ENCODE measurements at regions of chr1 and their contacts with region 1.

Region 1: GRCh38 chr1:186482661-186483255 is 21.8 kb upstream of the PDC start:
- DNase-seq: peak; percentile 31
- ATAC-seq: peak; percentile 86
- H3K4me3 ChIP-seq: no peak overlapping the region
- H3K27ac ChIP-seq: no peak overlapping the region
- H3K4me1 ChIP-seq: no peaks in the 10 kb centered on the region
- H3K27me3 ChIP-seq: no peaks in the 10 kb centered on the region
- CTCF ChIP-seq: peak; percentile 90 to 96 (median 94)
- EP300 ChIP-seq: no peak
- POLR2A ChIP-seq: no peak
- RAD21 ChIP-seq: peak; percentile 100

Region 2: GRCh38 chr1:186404454-186405051 is 78.2 kb before region 1 on chr1:
- CTCF ChIA-PET with region 1: interaction called, 8 read pairs
- POLR2A ChIA-PET with region 1: no interaction called
- RAD21 ChIA-PET with region 1: interaction called, 11 read pairs
- SMC1A ChIA-PET with region 1: interaction called, 7 read pairs
- in situ Hi-C with region 1: no loop called
- intact Hi-C with region 1: no loop called
- DNase-seq: no peak
- ATAC-seq: peak; percentile 72
- H3K4me3 ChIP-seq: no peak overlapping the region
- H3K27ac ChIP-seq: no peak overlapping the region
- H3K4me1 ChIP-seq: no peaks in the 10 kb centered on the region
- H3K27me3 ChIP-seq: no peaks in the 10 kb centered on the region
- CTCF ChIP-seq: peak; percentile 58 to 65 (median 60)
- EP300 ChIP-seq: no peak
- POLR2A ChIP-seq: no peak
- RAD21 ChIP-seq: peak; percentile 72

Region 3: DNA sequence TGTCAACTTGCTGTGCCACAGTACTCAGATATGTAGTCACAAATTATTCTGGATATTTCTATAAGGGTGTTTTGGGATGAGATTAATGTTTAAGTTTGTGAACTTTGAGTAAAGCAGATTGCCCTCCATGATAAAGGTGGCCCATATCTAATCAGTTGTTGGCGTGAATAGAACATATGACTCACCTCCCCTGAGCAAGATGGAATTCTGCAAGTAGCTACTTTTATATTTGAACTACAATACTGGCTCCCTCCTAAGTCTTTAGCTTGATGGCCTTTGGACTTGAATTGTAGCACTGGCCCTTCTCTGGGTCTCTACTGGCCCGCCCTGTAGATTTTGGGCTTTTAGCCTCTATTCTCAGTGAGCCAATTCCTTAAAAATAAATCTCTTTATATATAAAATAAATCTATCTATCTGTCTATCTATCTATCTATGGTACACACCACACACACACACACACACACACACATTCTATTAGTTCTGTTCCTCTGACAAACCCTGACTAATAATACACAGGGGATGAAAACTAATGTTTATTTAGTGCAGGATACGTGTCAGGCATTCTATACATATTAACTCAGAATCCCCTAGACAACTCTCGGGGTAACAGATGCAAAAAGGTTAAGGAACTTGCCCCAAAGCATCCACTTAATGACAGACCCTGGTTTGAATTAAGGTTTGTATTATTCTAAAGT is 16.1 kb after region 1 on chr1:
- CTCF ChIA-PET with region 1: interaction called, 10 read pairs
- POLR2A ChIA-PET with region 1: no interaction called
- RAD21 ChIA-PET with region 1: interaction called, 3 read pairs
- SMC1A ChIA-PET with region 1: interaction called, 3 read pairs
- in situ Hi-C with region 1: no loop called
- intact Hi-C with region 1: no loop called
- DNase-seq: no peak
- ATAC-seq: no peak
- H3K4me3 ChIP-seq: no peak overlapping the region
- H3K27ac ChIP-seq: no peak overlapping the region
- H3K4me1 ChIP-seq: peaks cover 4% of the 10 kb centered on the region; the same call in 1 of the 2 replicates
- H3K27me3 ChIP-seq: no peaks in the 10 kb centered on the region
- CTCF ChIP-seq: no peak
- EP300 ChIP-seq: no peak
- POLR2A ChIP-seq: no peak
- RAD21 ChIP-seq: no peak

Region 4: DNA sequence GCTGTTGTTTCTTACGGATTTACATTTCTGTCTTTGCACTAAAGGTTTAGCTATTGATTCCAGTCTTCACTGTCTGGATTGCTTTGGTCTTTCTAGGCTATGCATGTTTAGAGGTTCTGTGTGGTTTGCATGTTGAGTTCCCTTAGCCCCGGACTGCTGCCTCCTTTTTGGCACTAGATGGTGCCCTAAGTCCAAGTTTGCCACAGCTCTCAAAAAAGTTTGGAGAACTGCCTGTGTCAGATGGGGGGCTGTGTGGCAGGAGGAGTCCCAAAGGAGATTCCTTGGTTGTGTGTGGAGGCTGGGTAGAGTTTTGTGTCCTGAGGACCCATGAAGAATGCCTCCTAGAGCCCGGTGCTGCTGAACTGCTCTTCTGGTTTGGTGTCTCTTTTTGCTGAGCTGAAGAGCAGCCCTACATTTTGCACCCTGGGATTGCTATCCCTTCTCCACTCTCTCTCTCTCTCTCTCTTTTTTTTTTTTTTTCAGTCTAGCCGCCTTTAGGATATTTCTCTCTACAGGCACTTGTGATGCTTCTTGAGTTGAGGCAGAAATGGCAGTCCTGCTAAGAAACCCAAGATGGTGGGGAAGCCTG is 123.1 kb after region 1 on chr1:
- CTCF ChIA-PET with region 1: interaction called, 5 read pairs
- POLR2A ChIA-PET with region 1: no interaction called
- RAD21 ChIA-PET with region 1: interaction called, 4 read pairs
- SMC1A ChIA-PET with region 1: interaction called, 3 read pairs
- in situ Hi-C with region 1: no loop called
- intact Hi-C with region 1: loop called (anchors 1 kb)
- DNase-seq: no peak
- ATAC-seq: peak; percentile 89
- H3K4me3 ChIP-seq: no peak overlapping the region
- H3K27ac ChIP-seq: no peak overlapping the region
- H3K4me1 ChIP-seq: no peaks in the 10 kb centered on the region
- H3K27me3 ChIP-seq: no peaks in the 10 kb centered on the region; a peak in 1 of 4 replicates
- CTCF ChIP-seq: peak; percentile 66 to 83 (median 70)
- EP300 ChIP-seq: no peak
- POLR2A ChIP-seq: no peak
- RAD21 ChIP-seq: peak; percentile 92

Region 5: GRCh38 chr1:186680245-186681061 is 197.7 kb after region 1 on chr1 and contains the start of gene PTGS2:
- CTCF ChIA-PET with region 1: interaction called, 6 read pairs
- POLR2A ChIA-PET with region 1: no interaction called
- RAD21 ChIA-PET with region 1: no interaction called
- SMC1A ChIA-PET with region 1: no interaction called
- in situ Hi-C with region 1: no loop called
- intact Hi-C with region 1: loop called (anchors 2 kb)
- DNase-seq: peak; percentile 25
- ATAC-seq: peak; percentile 92
- H3K4me3 ChIP-seq: 0 out of 2 replicates have a peak within 1 kb of the TSS, but pooled peaks have one; percentile 25
- H3K27ac ChIP-seq: no peak within 1 kb of the TSS
- H3K4me1 ChIP-seq: no peaks in the 10 kb centered on the region
- H3K27me3 ChIP-seq: peaks cover 4 to 16% of the 10 kb centered on the region in 2 experiments; a peak in 3 of 4 replicates
- CTCF ChIP-seq: peak in 2 of 3 experiments; percentile 11 to 28; a peak in 2 of 6 replicates
- EP300 ChIP-seq: no peak
- POLR2A ChIP-seq: no peak
- RAD21 ChIP-seq: no peak
- polyA plus RNA-seq, gene PTGS2: 0.10 TPM in 1 of 2 experiments, not detected in the other

Region 6: GRCh38 chr1:186806477-186806876 is 323.7 kb after region 1 on chr1:
- CTCF ChIA-PET with region 1: interaction called, 5 read pairs
- POLR2A ChIA-PET with region 1: no interaction called
- RAD21 ChIA-PET with region 1: interaction called, 5 read pairs
- SMC1A ChIA-PET with region 1: interaction called, 3 read pairs
- in situ Hi-C with region 1: loop called (anchors 10 kb)
- intact Hi-C with region 1: loop called (anchors 1 kb)
- DNase-seq: no peak
- ATAC-seq: peak; percentile 46; the same call in 1 of the 3 replicates
- H3K4me3 ChIP-seq: no peak overlapping the region
- H3K27ac ChIP-seq: no peak overlapping the region
- H3K4me1 ChIP-seq: peaks cover 3% of the 10 kb centered on the region
- H3K27me3 ChIP-seq: no peaks in the 10 kb centered on the region
- CTCF ChIP-seq: peak; percentile 25 to 55 (median 49); a peak in 5 of 6 replicates
- EP300 ChIP-seq: no peak
- POLR2A ChIP-seq: no peak
- RAD21 ChIP-seq: peak; percentile 73

Region 7: DNA sequence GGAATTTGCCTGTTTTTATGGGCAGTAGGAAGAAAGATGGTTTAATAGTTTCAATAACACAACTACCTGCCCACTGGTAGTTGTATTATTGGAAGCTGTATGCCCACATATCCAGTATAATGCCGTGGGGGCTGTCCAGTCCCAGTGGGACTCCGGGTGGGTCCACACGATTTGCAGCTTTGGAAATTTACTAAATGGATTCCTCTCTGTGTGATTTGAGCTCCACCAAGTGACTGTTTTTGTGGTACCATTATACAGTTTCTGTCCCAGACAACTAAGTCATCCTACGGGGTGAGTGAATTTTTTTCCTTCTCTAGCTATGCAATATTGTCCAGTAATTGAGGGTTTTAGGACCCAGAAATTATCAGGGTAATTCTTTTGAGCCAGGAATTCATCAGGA is 432.8 kb after region 1 on chr1:
- CTCF ChIA-PET with region 1: interaction called, 3 read pairs
- POLR2A ChIA-PET with region 1: no interaction called
- RAD21 ChIA-PET with region 1: no interaction called
- SMC1A ChIA-PET with region 1: no interaction called
- in situ Hi-C with region 1: no loop called
- intact Hi-C with region 1: loop called (anchors 5 kb)
- DNase-seq: no peak
- ATAC-seq: no peak
- H3K4me3 ChIP-seq: no peak overlapping the region
- H3K27ac ChIP-seq: no peak overlapping the region
- H3K4me1 ChIP-seq: no peaks in the 10 kb centered on the region
- H3K27me3 ChIP-seq: no peaks in the 10 kb centered on the region; a peak in 1 of 4 replicates
- CTCF ChIP-seq: 0 out of 6 replicates have a peak, but pooled peaks of 1 of the 3 experiments have one; percentile 5
- EP300 ChIP-seq: no peak
- POLR2A ChIP-seq: no peak
- RAD21 ChIP-seq: peak; percentile 33; the same call in 1 of the 2 replicates

Measured in GM12878 (cell line).